ENCODE measurements at regions of chr9 and their contacts with region 1.

Region 1: DNA sequence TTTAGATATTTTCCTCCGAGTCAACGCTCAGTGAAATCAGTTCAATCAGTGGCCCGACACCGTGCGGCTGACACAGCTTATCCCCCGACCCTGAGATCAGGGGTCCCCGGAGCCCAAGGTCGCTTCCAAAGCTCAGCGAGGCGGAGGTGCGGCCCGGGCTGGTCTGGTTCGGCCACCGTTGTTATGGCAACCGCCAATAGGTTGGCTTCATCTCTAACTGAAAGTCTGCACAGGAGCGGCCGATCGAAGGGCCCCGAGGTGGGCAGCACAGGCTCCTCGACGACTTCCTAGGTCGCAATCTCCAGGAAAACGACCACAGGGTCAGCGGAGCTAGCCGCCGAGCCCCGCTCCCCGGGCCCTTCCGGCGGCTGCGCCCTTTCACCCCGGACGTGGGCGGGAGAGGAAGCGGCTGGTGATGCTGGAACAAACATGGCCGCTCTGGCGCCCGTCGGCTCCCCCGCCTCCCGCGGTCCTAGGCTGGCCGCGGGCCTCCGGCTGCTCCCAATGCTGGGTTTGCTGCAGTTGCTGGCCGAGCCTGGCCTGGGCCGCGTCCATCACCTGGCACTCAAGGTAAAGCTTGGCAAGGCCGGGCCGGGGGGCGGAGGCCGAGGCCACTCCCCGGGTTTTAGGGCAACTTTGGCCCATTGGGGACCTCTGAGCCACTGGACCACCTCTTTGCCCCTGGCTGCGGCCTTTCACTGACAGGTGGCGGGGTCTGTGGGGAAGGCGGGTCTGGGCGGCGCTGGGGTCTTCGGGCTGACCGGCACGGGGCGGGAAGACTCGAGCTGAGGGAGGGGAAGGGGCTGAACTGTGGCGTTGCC is at the start of gene GPR107:
- DNase-seq: peak; percentile 88

Region 2: GRCh38 chr9:129863059-129863690 is 190.5 kb before region 1 on chr9:
- CTCF ChIA-PET with region 1: no interaction called
- POLR2A ChIA-PET with region 1: no interaction called
- DNase-seq: no peak

Region 3: GRCh38 chr9:130042833-130043653 is 10.7 kb before region 1 on chr9 and contains the start of gene FNBP1:
- CTCF ChIA-PET with region 1: interaction called, 4 read pairs
- POLR2A ChIA-PET with region 1: interaction called, 15 read pairs
- DNase-seq: peak; percentile 90